ENCODE measurements at regions of chr2 and their contacts with region 1.

Region 1: DNA sequence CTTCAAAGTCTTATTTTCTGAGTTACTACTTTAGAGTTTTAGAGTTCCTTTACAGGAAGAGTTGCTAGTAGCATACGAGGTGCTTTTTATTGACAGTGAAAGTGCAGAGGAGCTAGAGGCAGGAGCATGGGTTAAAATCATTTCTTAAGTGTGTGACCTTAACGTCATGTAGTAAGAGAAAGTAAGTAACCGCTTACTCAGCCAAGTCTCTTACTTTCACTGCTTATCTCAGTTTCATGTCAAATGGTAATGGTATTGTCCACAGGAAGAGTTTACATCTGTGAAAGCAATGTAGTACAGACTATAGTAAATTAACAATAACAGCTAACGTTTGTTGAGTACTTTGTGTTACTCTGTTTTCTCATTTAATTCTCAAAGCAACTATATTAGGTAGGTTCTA is 12.6 kb downstream of the NDUFAF7 start:
- DNase-seq: peak in 1 of 35 experiments; percentile 5
- ATAC-seq: peak; percentile 26 to 47 (median 32)
- H3K4me3 ChIP-seq: no peak overlapping the region
- H3K4me3 Mint-ChIP-seq: peak overlapping the region in 2 of 3 donors; percentile 8 to 29
- H3K27ac ChIP-seq: peak overlapping the region; percentile 41
- H3K27ac Mint-ChIP-seq: peak overlapping the region; percentile 29 to 88
- H3K4me1 ChIP-seq: no peaks in the 10 kb centered on the region
- H3K4me1 Mint-ChIP-seq: peaks cover 21 to 31% (median 29%) of the 10 kb centered on the region in 3 donors
- H3K27me3 ChIP-seq: no peaks in the 10 kb centered on the region
- H3K27me3 Mint-ChIP-seq: no peaks in the 10 kb centered on the region

Region 2: GRCh38 chr2:37223131-37223530 is 20.9 kb before region 1 on chr2:
- CTCF ChIA-PET with region 1: no interaction called
- POLR2A ChIA-PET with region 1: interaction called in 1 of 2 experiments, 10 read pairs
- DNase-seq: no peak
- ATAC-seq: no peak
- H3K4me3 ChIP-seq: no peak overlapping the region
- H3K4me3 Mint-ChIP-seq: no peak overlapping the region
- H3K27ac ChIP-seq: no peak overlapping the region
- H3K27ac Mint-ChIP-seq: peak overlapping the region; percentile 23 to 70
- H3K4me1 ChIP-seq: peaks cover 0 to 2% of the 10 kb centered on the region in 2 experiments
- H3K4me1 Mint-ChIP-seq: peaks cover 51 to 60% (median 54%) of the 10 kb centered on the region in 3 donors
- H3K27me3 ChIP-seq: no peaks in the 10 kb centered on the region
- H3K27me3 Mint-ChIP-seq: no peaks in the 10 kb centered on the region

Region 3: GRCh38 chr2:37573451-37574388 is 329.7 kb after region 1 on chr2:
- CTCF ChIA-PET with region 1: no interaction called
- POLR2A ChIA-PET with region 1: no interaction called
- DNase-seq: no peak
- ATAC-seq: no peak
- H3K4me3 ChIP-seq: no peak overlapping the region
- H3K4me3 Mint-ChIP-seq: no peak overlapping the region
- H3K27ac ChIP-seq: no peak overlapping the region
- H3K27ac Mint-ChIP-seq: no peak overlapping the region
- H3K4me1 ChIP-seq: peaks cover 0 to 5% of the 10 kb centered on the region in 2 experiments
- H3K4me1 Mint-ChIP-seq: peaks cover 11 to 16% (median 16%) of the 10 kb centered on the region in 3 donors
- H3K27me3 ChIP-seq: no peaks in the 10 kb centered on the region
- H3K27me3 Mint-ChIP-seq: no peaks in the 10 kb centered on the region

Region 4: DNA sequence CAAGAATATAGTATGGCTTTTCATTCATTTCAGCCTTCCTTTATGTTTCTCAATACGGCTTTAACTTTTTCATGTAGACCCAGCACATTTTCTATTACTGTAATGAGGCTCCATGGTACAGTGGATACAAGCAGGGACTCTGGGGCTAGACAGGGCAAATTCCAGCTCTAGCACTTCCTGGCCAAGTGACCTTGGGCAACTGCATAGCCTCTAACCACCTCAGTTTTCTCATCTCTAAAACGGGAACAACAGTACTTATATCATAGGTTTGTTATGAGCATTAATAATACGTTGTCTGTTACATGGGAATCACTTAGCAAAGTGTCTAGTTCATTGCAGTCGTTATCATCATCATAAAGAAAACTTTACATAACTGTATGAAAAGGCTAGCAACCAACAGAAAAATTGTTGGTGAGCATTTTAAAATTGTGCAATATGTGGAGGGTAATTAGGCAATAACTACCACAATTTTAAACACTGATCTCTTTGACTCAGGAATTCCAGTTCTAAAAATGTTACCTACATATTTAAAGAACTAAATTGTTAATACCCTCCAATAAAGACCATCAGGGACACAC is 667.4 kb after region 1 on chr2:
- CTCF ChIA-PET with region 1: no interaction called
- POLR2A ChIA-PET with region 1: no interaction called
- DNase-seq: no peak
- ATAC-seq: no peak
- H3K4me3 ChIP-seq: no peak overlapping the region
- H3K4me3 Mint-ChIP-seq: no peak overlapping the region
- H3K27ac ChIP-seq: no peak overlapping the region
- H3K27ac Mint-ChIP-seq: no peak overlapping the region
- H3K4me1 ChIP-seq: no peaks in the 10 kb centered on the region
- H3K4me1 Mint-ChIP-seq: no peaks in the 10 kb centered on the region
- H3K27me3 ChIP-seq: peaks cover 0 to 5% of the 10 kb centered on the region in 2 experiments
- H3K27me3 Mint-ChIP-seq: peaks cover 0 to 9% of the 10 kb centered on the region in 2 donors

Measured in T-cell (primary cell).